Head of caudate nucleus (tissue), 42 donors: ENCODE measurements at regions of chr2 and their contacts with region 1.

Region 1: DNA sequence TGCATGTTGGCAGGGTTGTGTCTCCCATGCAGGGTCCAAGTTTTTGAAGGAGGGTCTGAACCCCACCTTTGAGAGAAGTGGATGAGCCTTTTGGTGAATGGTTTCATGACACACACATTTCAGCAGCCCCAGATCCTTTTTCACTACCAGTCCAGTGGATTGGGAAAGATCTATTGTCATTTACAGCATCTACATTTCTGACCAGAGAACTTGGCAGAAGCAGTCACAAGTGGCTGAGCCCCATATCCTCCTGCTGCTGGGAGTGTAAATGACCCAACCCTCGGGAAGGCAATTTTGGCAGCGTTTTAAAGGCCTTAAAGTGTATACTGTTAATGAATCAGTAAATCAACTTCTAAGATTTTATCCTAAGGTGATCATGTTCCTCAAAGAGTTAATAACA is 174.1 kb upstream of the RASGRP3 start:
- DNase-seq: no peak

Region 2: DNA sequence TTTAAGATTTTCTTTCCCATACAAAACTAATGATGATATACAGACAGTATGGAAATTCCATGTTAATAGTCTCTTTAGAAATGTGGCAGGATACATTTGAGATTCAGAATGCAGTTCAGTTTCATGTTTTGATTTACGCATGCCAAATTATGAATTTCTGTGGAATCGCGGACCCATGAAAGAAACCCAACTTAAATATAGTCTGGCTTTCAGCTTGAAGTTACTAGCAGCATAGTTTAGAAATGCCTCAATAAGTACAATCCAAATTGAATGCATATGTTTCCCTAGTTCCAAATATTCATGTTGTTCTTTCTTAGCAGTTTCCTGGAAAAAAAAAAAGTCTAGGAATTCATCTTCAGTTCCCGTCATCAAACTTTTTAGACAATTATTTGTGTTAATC is 10.0 kb after region 1 on chr2:
- intact Hi-C with region 1: loop called (anchors 1 kb)
- DNase-seq: no peak

Region 3: DNA sequence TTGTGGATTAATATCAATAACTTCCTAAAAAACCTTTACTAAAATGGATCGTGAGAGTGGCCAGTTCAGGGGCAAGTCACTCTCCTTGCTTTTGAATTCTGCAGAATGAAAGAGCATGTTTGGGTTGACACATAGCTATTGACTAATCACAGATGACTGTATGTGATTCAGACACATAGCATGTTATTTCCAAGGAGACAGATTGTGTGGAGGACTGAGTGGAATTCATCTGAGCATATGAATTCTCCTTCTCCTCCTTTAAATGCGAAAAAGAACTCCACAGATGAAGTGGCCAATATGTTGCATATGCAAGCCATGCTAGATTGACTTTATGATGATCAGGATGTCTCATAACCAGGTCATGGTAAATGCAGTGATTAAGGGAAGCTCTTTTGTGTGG is 546.1 kb after region 1 on chr2:
- intact Hi-C with region 1: no loop called
- DNase-seq: no peak